Activated CD4-positive, alpha-beta T cell treated with anti-CD3 and anti-CD28 coated beads for 36 hours (primary cell): ENCODE measurements at regions of chr12 and their contacts with region 1.

Region 1: DNA sequence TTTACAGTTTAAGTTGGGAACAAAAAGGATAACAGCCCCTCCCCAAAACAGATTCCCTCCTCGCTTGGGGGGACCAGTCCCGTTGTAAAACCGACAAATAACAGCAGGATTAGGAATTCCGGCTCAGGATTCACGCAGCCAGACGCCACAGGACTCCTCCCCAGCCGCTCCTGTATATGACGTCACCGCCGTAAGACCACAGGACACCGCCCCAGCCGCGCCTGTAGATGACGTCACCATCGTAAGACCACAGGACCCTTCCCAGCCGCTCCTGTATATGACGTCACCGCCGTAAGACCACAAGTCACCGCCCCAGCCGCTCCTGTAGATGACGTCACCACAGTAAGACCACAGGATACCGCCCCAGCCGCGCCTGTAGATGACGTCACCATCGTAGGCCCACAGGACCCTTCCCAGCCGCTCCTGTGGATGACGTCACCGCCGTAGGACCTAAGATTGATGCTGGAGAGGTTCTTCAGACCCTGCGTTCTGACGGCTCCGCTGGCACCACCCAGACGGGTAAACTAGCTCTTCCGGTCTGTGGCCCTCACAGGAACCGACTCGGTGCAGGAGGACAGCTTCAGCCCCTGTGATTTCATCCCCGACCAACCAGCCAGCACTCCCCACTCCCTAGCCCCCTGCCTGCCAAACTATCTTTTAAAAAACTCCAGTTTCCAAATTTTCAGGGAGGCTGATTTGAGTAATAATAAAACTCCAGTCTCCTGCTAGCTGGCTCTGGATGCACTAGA is 43.9 kb upstream of the FBRSL1 start:
- DNase-seq: peak; percentile 79
- ATAC-seq: peak; percentile 22
- H3K4me3 Mint-ChIP-seq: peak overlapping the region; percentile 87
- H3K27ac Mint-ChIP-seq: peak overlapping the region; percentile 100
- H3K4me1 Mint-ChIP-seq: peaks cover 45% of the 10 kb centered on the region
- H3K27me3 Mint-ChIP-seq: no peaks in the 10 kb centered on the region

Region 2: DNA sequence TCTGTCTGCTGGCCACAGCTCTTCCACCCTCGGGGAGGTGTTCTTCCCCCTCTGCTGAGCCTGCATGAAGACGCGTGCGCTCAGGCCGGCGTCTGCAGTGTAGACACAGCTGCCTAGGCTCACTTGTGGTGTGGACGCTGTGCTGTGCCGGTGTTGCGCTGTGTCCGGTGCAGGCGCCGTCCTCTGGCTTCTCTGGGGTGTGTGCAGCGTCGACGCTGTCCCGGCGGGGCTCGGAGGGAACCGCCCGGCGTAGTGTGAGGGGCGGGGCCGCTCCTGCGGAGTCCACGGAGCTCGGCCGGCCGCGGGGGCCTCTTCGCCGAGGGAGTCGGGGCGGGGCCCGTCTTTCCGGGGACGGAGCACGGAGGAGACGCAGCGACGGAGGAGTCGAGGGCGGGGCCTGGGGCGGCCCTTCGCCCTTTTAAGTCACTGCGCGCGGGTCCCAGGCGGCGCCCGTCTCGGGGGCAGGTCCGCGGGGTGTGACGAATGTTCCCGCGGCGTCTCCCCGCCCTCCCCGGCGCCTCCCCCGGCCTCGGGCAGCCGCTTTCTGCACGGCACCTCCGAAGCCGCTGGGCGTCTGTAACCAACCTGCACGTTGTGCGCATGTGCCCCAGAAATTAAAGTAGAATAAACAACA is 256.6 kb before region 1 on chr12:
- CTCF ChIA-PET with region 1: no interaction called
- POLR2A ChIA-PET with region 1: no interaction called
- intact Hi-C with region 1: loop called in 1 of 2 experiments (anchors 1 kb)
- DNase-seq: peak; percentile 97
- ATAC-seq: peak; percentile 95
- H3K4me3 Mint-ChIP-seq: peak overlapping the region; percentile 78
- H3K27ac Mint-ChIP-seq: peak overlapping the region; percentile 79
- H3K4me1 Mint-ChIP-seq: peaks cover 28% of the 10 kb centered on the region
- H3K27me3 Mint-ChIP-seq: no peaks in the 10 kb centered on the region

Region 3: GRCh38 chr12:132687208-132688164 is 241.4 kb after region 1 on chr12 and contains the starts of genes POLE and PXMP2:
- CTCF ChIA-PET with region 1: no interaction called
- POLR2A ChIA-PET with region 1: no interaction called
- intact Hi-C with region 1: loop called in 1 of 2 experiments (anchors 5 kb)
- DNase-seq: peak; percentile 98
- ATAC-seq: peak; percentile 94
- H3K4me3 Mint-ChIP-seq: peak within 1 kb of the TSS; percentile 72
- H3K27ac Mint-ChIP-seq: peak within 1 kb of the TSS; percentile 55
- H3K4me1 Mint-ChIP-seq: peaks cover 19% of the 10 kb centered on the region
- H3K27me3 Mint-ChIP-seq: no peaks in the 10 kb centered on the region
- total RNA-seq, gene POLE: 121 to 124 TPM
- total RNA-seq, gene PXMP2: 12.2 to 14.3 TPM

Region 4: DNA sequence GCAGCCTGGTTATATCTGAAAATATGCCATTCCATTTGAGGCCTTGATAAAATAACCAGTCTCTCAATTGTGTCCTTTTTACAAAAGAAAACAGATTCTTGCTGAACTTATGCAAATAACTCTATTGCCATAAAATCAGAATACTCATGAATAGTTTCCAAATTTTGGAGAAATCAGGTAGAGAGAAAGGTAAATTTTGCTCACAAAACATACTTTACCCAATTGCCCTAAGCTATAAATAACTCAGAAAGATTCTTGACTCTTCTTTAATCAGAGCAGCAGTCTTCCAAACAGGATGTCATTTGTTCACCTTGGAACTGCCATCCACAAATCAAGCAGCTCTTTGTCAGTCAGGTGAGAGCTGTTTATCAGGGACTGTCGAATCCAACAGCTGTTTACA is 552.7 kb after region 1 on chr12:
- CTCF ChIA-PET with region 1: no interaction called
- POLR2A ChIA-PET with region 1: no interaction called
- intact Hi-C with region 1: no loop called
- DNase-seq: no peak
- ATAC-seq: no peak
- H3K4me3 Mint-ChIP-seq: no peak overlapping the region
- H3K27ac Mint-ChIP-seq: no peak overlapping the region
- H3K4me1 Mint-ChIP-seq: peaks cover 5% of the 10 kb centered on the region
- H3K27me3 Mint-ChIP-seq: no peaks in the 10 kb centered on the region